ENCODE measurements at regions of chr1 and their contacts with region 1.

Region 1: DNA sequence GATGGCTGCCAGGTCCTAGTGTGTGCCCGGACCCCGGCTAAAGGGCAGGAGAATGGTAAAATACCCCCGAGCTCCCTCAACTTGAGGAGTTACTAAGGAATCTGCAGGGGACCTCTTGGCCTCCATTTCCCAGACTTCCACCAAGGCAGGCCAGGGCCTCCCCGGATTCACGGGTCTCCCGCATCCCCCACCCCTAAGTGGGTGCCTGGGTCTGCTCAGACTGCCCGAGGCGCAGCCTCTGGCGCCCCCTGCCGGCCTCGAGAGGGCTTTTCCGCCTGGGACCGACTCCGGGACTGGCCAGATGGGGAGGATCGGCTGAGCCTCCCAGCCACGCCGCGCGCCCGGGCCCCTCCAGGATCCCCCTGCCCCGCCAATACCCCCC is 1.7 kb downstream of the PLEKHG5 start:
- DNase-seq: peak; percentile 78
- H3K4me3 Mint-ChIP-seq: peak overlapping the region; percentile 77
- H3K27ac Mint-ChIP-seq: peak overlapping the region; percentile 66
- H3K4me1 Mint-ChIP-seq: peaks cover 38% of the 10 kb centered on the region
- H3K27me3 Mint-ChIP-seq: no peaks in the 10 kb centered on the region
- CTCF ChIP-seq: peak; percentile 97

Region 2: GRCh38 chr1:6401673-6402072 is 88.1 kb before region 1 on chr1:
- CTCF ChIA-PET with region 1: interaction called, 10 read pairs
- POLR2A ChIA-PET with region 1: no interaction called
- intact Hi-C with region 1: no loop called
- DNase-seq: no peak
- H3K4me3 Mint-ChIP-seq: no peak overlapping the region
- H3K27ac Mint-ChIP-seq: no peak overlapping the region
- H3K4me1 Mint-ChIP-seq: no peaks in the 10 kb centered on the region
- H3K27me3 Mint-ChIP-seq: no peaks in the 10 kb centered on the region
- CTCF ChIP-seq: no peak

Region 3: GRCh38 chr1:6438047-6438525 is 51.7 kb before region 1 on chr1:
- CTCF ChIA-PET with region 1: interaction called, 11 read pairs
- POLR2A ChIA-PET with region 1: no interaction called
- intact Hi-C with region 1: no loop called
- DNase-seq: peak; percentile 77
- H3K4me3 Mint-ChIP-seq: no peak overlapping the region
- H3K27ac Mint-ChIP-seq: no peak overlapping the region
- H3K4me1 Mint-ChIP-seq: peaks cover 13% of the 10 kb centered on the region
- H3K27me3 Mint-ChIP-seq: no peaks in the 10 kb centered on the region
- CTCF ChIP-seq: peak; percentile 89

Region 4: DNA sequence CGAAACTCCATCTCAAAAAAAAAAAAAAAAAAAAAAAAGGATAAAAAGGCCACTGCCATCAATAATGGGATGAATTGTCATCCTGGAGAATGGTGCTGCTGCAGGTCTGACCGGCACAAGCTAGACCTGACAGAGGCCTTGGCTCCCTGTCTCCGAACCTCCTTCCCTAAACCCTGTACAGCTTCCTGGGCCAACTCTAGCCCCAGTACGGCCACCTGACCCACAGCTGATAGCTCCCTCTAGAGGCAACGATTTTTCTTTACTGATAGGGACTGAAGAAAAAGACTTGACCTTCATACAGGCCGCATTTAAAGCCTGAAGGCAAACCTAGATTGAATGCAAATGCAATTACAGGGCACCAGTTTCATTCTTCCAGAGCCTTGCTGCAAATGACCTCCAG is 33.8 kb after region 1 on chr1:
- CTCF ChIA-PET with region 1: interaction called, 23 read pairs
- POLR2A ChIA-PET with region 1: interaction called, 63 read pairs
- intact Hi-C with region 1: loop called (anchors 1 kb)
- DNase-seq: peak; percentile 64
- H3K4me3 Mint-ChIP-seq: no peak overlapping the region
- H3K27ac Mint-ChIP-seq: no peak overlapping the region
- H3K4me1 Mint-ChIP-seq: peaks cover 24% of the 10 kb centered on the region
- H3K27me3 Mint-ChIP-seq: no peaks in the 10 kb centered on the region
- CTCF ChIP-seq: peak; percentile 47

Region 5: DNA sequence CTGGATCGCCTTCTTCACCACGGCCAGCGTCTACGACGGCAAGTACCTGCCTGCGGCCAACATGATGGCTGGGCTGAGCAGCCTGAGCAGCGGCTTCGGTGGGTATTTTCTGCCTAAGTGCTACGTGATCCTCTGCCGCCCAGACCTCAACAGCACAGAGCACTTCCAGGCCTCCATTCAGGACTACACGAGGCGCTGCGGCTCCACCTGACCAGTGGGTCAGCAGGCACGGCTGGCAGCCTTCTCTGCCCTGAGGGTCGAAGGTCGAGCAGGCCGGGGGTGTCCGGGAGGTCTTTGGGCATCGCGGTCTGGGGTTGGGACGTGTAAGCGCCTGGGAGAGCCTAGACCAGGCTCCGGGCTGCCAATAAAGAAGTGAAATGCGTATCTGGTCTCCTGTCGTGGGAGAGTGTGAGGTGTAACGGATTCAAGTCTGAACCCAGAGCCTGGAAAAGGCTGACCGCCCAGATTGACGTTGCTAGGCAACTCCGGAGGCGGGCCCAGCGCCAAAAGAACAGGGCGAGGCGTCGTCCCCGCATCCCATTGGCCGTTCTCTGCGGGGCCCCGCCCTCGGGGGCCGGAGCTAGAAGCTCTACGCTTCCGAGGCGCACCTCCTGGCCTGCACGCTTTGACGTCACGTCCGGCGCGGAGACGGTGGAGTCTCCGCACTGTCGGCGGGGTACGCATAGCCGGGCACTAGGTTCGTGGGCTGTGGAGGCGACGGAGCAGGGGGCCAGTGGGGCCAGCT is 89.8 kb after region 1 on chr1 and contains the start of gene ZBTB48:
- CTCF ChIA-PET with region 1: interaction called, 6 read pairs
- POLR2A ChIA-PET with region 1: interaction called, 10 read pairs
- intact Hi-C with region 1: no loop called
- DNase-seq: peak; percentile 99
- H3K4me3 Mint-ChIP-seq: peak within 1 kb of the TSS; percentile 94
- H3K27ac Mint-ChIP-seq: peak within 1 kb of the TSS; percentile 100
- H3K4me1 Mint-ChIP-seq: peaks cover 27% of the 10 kb centered on the region
- H3K27me3 Mint-ChIP-seq: no peaks in the 10 kb centered on the region
- CTCF ChIP-seq: no peak
- total RNA-seq, gene ZBTB48: 40.6 TPM in 2 replicates

Region 6: GRCh38 chr1:6646499-6647148 is 156.8 kb after region 1 on chr1:
- CTCF ChIA-PET with region 1: interaction called, 5 read pairs
- POLR2A ChIA-PET with region 1: no interaction called
- intact Hi-C with region 1: loop called (anchors 10 kb)
- DNase-seq: peak; percentile 48
- H3K4me3 Mint-ChIP-seq: no peak overlapping the region
- H3K27ac Mint-ChIP-seq: no peak overlapping the region
- H3K4me1 Mint-ChIP-seq: no peaks in the 10 kb centered on the region
- H3K27me3 Mint-ChIP-seq: no peaks in the 10 kb centered on the region
- CTCF ChIP-seq: peak; percentile 47

Region 7: DNA sequence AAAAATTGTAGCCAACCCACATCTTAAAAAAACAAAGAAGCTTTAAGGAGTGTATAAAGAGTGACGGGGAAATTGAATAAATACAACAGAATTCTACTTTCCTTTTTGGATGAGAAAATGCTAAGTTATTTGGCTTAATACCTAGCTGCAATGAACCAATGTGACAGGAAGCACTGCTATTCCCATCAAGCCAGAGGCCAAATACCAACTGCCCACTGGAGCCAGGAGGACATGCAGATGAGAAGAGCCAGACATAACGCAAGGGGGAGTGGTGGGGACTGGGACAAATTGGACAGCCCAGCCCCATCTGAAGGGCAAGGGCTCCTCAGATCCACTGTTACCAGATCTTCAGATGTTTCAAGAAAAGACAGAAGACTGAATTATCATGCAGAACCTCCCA is 186.2 kb after region 1 on chr1:
- CTCF ChIA-PET with region 1: no interaction called
- POLR2A ChIA-PET with region 1: no interaction called
- intact Hi-C with region 1: no loop called
- DNase-seq: no peak
- H3K4me3 Mint-ChIP-seq: no peak overlapping the region
- H3K27ac Mint-ChIP-seq: no peak overlapping the region
- H3K4me1 Mint-ChIP-seq: no peaks in the 10 kb centered on the region
- H3K27me3 Mint-ChIP-seq: no peaks in the 10 kb centered on the region
- CTCF ChIP-seq: no peak